ENCODE measurements at regions of chr11 and their contacts with region 1.

Region 1: DNA sequence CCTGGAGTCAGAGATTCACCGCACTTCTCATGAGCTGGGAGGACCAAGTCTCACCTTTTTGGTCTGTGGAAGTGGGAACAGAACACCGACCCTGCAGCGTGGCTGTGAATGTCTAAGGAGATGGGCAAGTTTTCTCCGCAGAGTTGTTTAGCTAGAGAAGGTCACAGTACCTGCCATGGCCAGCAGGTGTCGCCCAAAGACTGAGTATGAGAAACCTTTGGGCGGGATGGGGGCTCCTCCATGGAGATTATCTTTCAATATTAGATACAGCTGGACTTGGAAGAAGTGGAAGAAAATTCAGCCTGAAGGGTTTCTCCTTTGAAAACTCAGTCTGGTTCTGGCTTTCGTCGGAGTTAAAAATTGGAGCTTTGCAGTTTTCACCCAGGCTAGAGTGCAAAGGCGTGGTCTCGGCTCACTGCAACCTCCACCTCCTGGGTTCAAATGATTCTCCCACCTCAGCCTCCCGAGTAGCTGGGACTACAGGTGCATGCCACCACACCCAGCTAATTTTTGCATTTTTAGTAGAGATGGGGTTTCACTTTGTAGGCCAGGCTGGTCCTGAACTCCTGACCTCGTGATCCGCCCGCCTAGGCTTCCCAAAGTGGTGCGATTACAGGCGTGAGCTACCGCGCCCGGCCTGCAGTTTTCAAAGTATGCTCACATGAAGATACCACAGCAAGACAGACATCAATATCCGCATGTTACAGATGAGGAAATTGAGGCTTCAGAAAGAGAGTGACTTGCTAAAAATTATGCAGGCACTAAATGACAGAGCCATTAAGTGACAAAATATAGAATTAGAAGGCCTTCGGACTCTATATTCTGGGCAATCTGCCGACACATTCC is 10.7 kb upstream of the DSCAML1 start:
- DNase-seq: peak; percentile 55 to 88 (median 72)
- ATAC-seq: peak; percentile 85
- H3K4me3 ChIP-seq: no peak overlapping the region
- H3K4me3 Mint-ChIP-seq: no peak overlapping the region
- H3K27ac ChIP-seq: no peak overlapping the region
- H3K27ac Mint-ChIP-seq: no peak overlapping the region
- H3K4me1 ChIP-seq: peaks cover 21% of the 10 kb centered on the region
- H3K4me1 Mint-ChIP-seq: peaks cover 13% of the 10 kb centered on the region
- H3K27me3 ChIP-seq: no peaks in the 10 kb centered on the region
- H3K27me3 Mint-ChIP-seq: no peaks in the 10 kb centered on the region
- CTCF ChIP-seq: peak; percentile 94

Region 2: DNA sequence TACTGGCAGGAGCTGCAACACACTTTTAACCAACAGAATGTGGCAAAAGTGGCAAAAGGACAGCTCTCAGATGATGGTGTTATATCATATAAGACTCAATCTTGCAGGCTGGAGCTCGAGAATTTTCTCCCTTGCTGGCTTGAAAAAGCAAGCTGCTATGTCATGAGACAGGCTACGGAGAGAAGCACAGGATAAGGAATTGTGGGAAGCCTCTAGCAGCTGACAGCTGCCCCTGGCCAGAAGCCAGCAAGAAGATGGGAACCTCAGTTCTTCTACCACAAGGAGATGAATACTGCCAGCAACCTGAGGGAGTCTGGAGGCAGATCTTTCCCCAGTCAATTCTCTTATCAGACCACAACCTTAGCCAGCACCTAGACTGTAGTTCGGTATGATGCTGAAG is 44.1 kb after region 1 on chr11:
- CTCF ChIA-PET with region 1: no interaction called
- POLR2A ChIA-PET with region 1: no interaction called
- intact Hi-C with region 1: no loop called
- DNase-seq: no peak
- ATAC-seq: no peak
- H3K4me3 ChIP-seq: no peak overlapping the region
- H3K4me3 Mint-ChIP-seq: no peak overlapping the region
- H3K27ac ChIP-seq: no peak overlapping the region
- H3K27ac Mint-ChIP-seq: no peak overlapping the region
- H3K4me1 ChIP-seq: peaks cover 6% of the 10 kb centered on the region
- H3K4me1 Mint-ChIP-seq: no peaks in the 10 kb centered on the region
- H3K27me3 ChIP-seq: no peaks in the 10 kb centered on the region
- H3K27me3 Mint-ChIP-seq: peaks cover 9% of the 10 kb centered on the region
- CTCF ChIP-seq: no peak

Region 3: DNA sequence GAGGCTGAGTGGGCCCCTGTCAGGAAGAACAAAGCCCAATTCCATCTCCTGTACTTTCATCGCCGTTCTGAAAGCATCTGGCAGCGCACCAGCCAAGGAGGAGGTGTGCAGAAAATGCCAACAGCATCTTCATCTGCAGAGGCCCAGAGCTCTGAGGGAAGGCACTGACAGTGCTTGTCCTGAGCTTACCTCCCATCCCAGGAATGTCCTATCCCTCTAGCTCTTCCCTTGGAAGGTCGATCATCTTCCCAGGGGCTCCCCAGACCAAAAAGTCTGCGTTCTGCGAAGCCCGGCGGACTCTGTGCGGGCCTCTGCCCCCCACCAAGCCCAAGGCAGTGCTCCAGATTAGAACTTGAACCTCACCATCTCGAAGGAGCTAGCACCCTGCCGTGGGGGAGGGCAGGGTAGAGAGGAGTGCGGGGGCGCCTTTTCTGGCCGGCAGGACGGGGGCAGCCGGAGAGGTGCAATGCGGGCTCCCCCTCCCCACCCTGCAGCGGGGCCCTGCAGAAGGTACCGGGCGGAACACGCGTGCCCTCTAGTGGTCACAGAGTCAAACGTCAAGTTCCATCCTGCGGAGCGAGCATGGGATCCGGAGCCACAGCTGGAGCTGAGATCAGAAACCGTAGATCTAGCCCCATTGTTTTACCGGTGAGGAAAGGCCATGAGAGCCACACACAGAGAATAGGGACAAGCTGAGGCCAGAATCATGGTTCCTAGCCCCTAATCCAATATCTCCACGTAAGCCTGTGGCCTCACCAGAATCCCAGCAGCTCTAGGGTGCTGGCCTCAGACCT is 363.8 kb after region 1 on chr11:
- CTCF ChIA-PET with region 1: interaction called, 4 read pairs
- POLR2A ChIA-PET with region 1: interaction called, 5 read pairs
- intact Hi-C with region 1: loop called (anchors 1 to 10 kb)
- DNase-seq: peak; percentile 53 to 88 (median 66)
- ATAC-seq: peak; percentile 99
- H3K4me3 ChIP-seq: no peak overlapping the region
- H3K4me3 Mint-ChIP-seq: no peak overlapping the region
- H3K27ac ChIP-seq: no peak overlapping the region
- H3K27ac Mint-ChIP-seq: no peak overlapping the region
- H3K4me1 ChIP-seq: peaks cover 8% of the 10 kb centered on the region
- H3K4me1 Mint-ChIP-seq: peaks cover 5% of the 10 kb centered on the region
- H3K27me3 ChIP-seq: peaks cover 0 to 2% of the 10 kb centered on the region in 2 experiments
- H3K27me3 Mint-ChIP-seq: peaks cover 11% of the 10 kb centered on the region
- CTCF ChIP-seq: peak; percentile 94

Measured in CD4-positive, alpha-beta T cell (primary cell).